ENCODE measurements at regions of chr12 and their contacts with region 1.

Region 1: DNA sequence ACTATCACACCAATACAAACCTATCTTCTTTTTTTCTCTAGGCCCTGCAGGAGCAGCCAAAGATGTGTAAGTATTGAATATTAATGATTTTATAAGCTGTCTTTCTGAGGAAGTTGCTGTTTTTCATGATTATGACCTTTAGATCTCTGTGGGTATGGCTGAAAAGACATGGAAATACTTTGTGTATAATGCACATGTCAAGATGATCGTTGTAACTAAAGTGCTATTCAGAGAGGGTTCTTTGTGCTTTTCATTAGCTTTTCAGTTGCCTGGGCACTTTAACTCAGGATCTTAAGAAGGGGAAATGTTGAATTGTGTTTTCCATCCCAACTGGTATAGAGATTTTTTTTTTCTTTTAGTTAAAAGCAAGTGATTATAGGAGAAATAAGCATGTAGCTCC is 18.1 kb downstream of the C12orf75 start:
- DNase-seq: no peak
- H3K4me3 Mint-ChIP-seq: no peak overlapping the region
- H3K27ac Mint-ChIP-seq: no peak overlapping the region
- H3K4me1 Mint-ChIP-seq: peaks cover 48% of the 10 kb centered on the region
- H3K27me3 Mint-ChIP-seq: no peaks in the 10 kb centered on the region

Region 2: DNA sequence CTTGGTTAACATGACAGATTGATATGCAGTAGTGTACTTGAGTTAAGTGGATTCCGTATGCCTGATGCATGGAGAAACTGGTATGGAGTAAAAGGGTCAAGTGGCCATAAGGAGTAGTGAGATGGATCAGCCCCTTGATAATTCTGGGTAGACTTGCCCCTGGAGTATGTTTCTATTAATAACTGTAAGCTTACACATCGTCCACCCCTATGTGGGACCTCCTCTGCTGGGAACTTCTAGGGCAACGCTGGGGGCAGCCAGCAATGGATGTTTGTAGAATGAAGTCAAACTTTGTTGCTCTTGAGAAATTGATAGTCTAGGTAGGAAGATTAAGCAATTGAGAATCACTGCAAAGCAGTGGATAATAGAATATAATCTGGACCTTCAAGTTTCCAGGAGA is 14.6 kb before region 1 on chr12:
- CTCF ChIA-PET with region 1: interaction called, 10 read pairs
- POLR2A ChIA-PET with region 1: interaction called, 3 read pairs
- DNase-seq: no peak
- H3K4me3 Mint-ChIP-seq: no peak overlapping the region
- H3K27ac Mint-ChIP-seq: no peak overlapping the region
- H3K4me1 Mint-ChIP-seq: peaks cover 78% of the 10 kb centered on the region
- H3K27me3 Mint-ChIP-seq: no peaks in the 10 kb centered on the region